Activated T-helper 1 cell treated with anti-CD3 and anti-CD28 coated beads, Interleukin-12 subunit alpha, Interleukin-12 subunit beta, Interleukin-2, Interleukin-4 antibody, amounts not matched to agents 30 ng/mL and 10 ng/mL and 1 ng/mL, durations not matched to agents 14 hours and 24 hours and 36 hours (primary cell): ENCODE measurements at regions of chr14 and their contacts with region 1.

Region 1: GRCh38 chr14:22900081-22900799 is 17.2 kb downstream of the REM2 start:
- DNase-seq: peak; percentile 30
- H3K4me3 Mint-ChIP-seq: no peak overlapping the region
- H3K27ac Mint-ChIP-seq: peak overlapping the region; percentile 57
- H3K4me1 Mint-ChIP-seq: peaks cover 19% of the 10 kb centered on the region
- H3K27me3 Mint-ChIP-seq: no peaks in the 10 kb centered on the region

Region 2: DNA sequence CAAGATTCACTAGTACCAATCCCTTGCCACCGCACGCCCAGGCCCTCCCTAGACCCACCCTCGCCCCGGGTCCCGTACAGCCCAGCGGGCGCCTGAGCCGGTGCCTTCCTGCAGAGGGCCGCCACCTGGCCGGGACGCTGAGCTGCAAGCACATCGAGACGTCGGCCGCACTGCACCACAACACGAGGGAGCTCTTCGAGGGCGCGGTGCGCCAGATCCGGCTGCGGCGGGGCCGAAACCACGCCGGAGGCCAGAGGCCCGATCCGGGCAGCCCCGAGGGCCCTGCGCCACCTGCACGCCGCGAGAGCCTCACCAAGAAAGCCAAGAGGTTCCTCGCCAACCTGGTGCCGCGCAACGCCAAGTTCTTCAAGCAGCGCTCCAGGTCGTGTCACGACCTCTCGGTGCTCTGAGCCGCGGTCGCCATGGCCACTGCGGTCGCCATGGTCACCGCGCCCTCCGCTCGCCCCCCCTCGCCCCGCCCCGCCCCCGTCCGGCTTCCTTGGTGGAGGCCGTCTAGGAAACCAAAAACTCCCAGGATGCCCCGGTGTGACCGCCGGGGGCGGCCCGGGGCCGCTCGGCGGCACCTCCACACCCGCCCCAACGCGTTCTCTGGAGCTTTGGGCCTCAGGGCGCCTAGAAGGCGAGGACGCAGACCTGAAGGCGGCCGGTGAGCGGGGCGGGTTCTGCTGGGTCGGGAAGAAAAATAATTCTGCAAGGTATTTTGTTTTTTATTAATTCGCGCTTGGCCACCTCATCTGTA is 13.6 kb before region 1 on chr14:
- intact Hi-C with region 1: loop called (anchors 2 kb)
- DNase-seq: peak; percentile 62
- H3K4me3 Mint-ChIP-seq: peak overlapping the region; percentile 87
- H3K27ac Mint-ChIP-seq: peak overlapping the region; percentile 88
- H3K4me1 Mint-ChIP-seq: peaks cover 31% of the 10 kb centered on the region
- H3K27me3 Mint-ChIP-seq: peaks cover 8% of the 10 kb centered on the region